ENCODE measurements at regions of chr3 and their contacts with region 1.

Region 1: GRCh38 chr3:46089237-46090011 is 62.1 kb upstream of the XCR1 start:
- DNase-seq: peak in 2 of 4 donors; percentile 84 to 89
- ATAC-seq: peak; percentile 84
- H3K4me3 ChIP-seq: no peak overlapping the region
- H3K27ac ChIP-seq: peak overlapping the region; percentile 67 to 97
- H3K4me1 ChIP-seq: peaks cover 5 to 79% of the 10 kb centered on the region in 2 donors
- H3K27me3 ChIP-seq: no peaks in the 10 kb centered on the region
- CTCF ChIP-seq: no peak

Region 2: DNA sequence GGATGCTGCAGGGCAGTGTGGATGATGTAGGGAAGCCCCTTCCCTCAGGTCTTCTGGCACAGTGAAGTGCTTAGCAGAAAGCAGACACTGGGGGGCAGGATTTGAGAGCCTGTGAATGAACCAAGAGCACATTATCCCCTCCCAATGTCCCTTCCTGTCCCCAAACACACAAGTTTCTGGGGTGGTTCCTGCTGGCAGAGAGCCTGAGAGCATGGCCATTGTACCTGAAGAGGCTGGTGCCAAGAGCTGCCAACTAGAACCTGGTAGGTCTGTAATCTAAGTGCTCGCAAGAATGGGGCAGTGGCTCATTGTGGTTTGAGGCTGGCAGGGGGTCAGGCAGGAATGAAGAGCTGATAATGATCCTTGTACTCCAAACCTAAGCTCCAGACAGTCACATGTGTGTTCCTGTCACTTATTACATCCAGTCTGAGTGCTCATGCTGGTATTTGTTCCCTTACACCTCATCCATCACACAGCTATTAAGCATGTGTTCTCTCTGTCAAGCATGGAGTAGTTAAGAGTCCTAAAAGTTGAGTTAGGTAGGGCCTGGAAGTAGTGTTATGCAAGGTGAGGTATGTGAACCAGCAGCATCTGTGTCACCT is 125.4 kb after region 1 on chr3:
- intact Hi-C with region 1: loop called in 1 of 2 experiments (anchors 5 kb)
- DNase-seq: peak in 2 of 4 donors; percentile 48 to 78
- ATAC-seq: peak; percentile 86
- H3K4me3 ChIP-seq: no peak overlapping the region
- H3K27ac ChIP-seq: no peak overlapping the region
- H3K4me1 ChIP-seq: peaks cover 5 to 40% of the 10 kb centered on the region in 2 donors
- H3K27me3 ChIP-seq: no peaks in the 10 kb centered on the region
- CTCF ChIP-seq: peak in 1 of 2 donors; percentile 20

Region 3: DNA sequence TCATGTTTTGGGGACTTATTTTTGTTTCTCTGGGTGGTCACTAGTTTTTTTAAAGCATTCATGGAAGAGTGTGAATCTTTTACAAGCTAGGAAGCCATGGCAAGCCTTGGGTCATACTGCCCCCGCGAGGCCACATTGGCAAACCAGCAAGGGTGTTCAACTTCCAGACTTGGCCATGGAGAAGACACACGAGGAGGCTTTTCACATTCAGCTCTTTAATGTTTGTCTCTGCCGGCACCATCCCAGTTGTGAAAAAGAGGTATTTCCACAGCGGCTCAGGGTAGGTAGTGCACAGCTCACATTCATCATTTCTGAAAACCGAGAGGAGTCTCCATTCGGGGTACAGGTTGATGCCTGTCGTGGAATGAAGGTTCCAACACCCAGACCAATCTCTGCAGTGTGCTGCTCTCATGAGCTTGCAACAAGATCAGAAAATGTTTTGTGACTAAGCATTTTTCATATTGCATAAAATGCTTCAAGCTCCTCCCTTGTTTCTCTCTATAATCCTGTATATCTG is 289.1 kb after region 1 on chr3:
- intact Hi-C with region 1: loop called in 1 of 2 experiments (anchors 10 kb)
- DNase-seq: peak in 3 of 4 donors; percentile 75 to 93 (median 77)
- ATAC-seq: peak; percentile 80
- H3K4me3 ChIP-seq: no peak overlapping the region
- H3K27ac ChIP-seq: no peak overlapping the region
- H3K4me1 ChIP-seq: peaks cover 18 to 51% of the 10 kb centered on the region in 2 donors
- H3K27me3 ChIP-seq: no peaks in the 10 kb centered on the region
- CTCF ChIP-seq: peak; percentile 68 to 71

Measured in left lung (tissue), 14 donors.